Activated B cell treated with CpG ODN at 0.5 μM for 24 hours (primary cell): ENCODE measurements at regions of chr1 and their contacts with region 1.

Region 1: DNA sequence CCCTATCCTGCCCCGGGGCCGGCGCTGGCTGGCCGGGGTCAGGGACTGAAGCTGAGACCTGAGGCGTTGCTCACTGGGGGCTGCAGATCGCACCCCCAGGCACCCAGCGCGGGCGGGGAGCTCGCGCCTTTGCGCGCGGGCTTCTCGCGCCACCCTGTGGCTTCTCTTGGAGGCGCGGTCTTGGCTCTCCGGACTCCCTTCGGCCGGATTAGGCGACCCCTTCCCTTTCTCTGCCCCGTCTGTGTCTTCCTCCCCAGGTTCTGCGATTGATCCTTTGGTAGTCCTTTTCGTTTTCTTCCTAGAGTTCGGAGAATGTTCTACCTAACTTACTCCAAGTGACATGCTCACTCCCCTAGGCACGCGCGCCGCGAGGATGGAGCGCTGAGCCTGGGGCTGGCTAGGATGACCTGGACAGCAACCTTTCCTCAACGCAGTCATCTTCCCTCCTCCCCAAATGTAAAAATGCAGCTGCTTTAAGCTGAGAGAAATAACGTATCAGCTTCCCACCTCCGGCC is 495 bp upstream of the NTRK1 start:
- DNase-seq: peak; percentile 46
- ATAC-seq: peak; percentile 69
- H3K4me3 Mint-ChIP-seq: peak overlapping the region; percentile 65
- H3K27ac Mint-ChIP-seq: no peak overlapping the region
- H3K4me1 Mint-ChIP-seq: peaks cover 14% of the 10 kb centered on the region
- H3K27me3 Mint-ChIP-seq: peaks cover 50% of the 10 kb centered on the region
- CTCF ChIP-seq: no peak

Region 2: DNA sequence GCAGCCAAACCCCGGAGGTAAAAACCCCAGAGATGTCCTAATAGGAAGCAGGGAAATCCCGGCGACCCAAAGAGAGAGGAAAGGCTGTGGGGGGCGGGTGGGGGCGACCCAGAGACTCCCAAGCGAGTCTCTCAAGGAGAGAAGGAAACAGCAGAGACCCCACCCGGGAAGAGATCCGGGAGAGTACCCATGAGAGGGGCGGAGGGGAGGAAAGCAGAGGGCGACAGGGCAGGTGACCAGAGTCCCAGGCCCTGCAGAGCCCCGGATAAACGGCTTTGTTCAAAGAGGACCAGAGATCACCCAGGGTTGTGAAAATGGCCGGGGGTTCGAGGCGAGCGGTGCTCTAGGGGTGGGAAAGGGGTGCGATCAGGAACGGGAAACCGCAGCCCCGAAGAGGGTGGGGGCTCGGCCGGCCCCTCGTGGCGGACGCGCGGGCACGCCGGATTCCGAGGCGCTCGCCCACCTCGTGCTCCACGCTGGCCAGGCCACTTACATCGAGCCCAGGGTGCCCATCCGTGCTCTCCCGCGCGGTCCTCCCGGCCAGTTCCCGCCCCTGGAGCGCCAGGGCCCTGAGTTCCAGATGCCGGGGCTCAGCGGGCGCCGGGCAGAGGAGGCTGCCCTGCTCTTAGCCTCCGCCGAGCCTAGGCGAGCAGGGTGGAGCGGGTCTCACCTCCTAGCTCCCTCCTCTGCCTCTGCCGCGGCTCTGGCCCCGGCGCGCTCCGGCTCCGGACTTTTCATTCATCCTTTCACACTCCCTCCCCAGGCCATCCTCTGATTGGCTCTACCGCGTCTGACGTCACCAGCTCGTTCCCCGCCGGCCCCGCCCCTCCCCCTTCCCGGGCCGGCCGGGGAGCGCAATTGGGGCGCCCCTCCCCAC is 438.9 kb before region 1 on chr1:
- CTCF ChIA-PET with region 1: no interaction called
- POLR2A ChIA-PET with region 1: no interaction called
- intact Hi-C with region 1: no loop called
- DNase-seq: peak; percentile 50
- ATAC-seq: peak; percentile 73
- H3K4me3 Mint-ChIP-seq: peak overlapping the region; percentile 89
- H3K27ac Mint-ChIP-seq: no peak overlapping the region
- H3K4me1 Mint-ChIP-seq: peaks cover 23% of the 10 kb centered on the region
- H3K27me3 Mint-ChIP-seq: peaks cover 74% of the 10 kb centered on the region
- CTCF ChIP-seq: no peak

Region 3: GRCh38 chr1:156797212-156797871 is 62.8 kb before region 1 on chr1:
- CTCF ChIA-PET with region 1: interaction called, 27 read pairs
- POLR2A ChIA-PET with region 1: interaction called, 4 read pairs
- intact Hi-C with region 1: loop called (anchors 1 kb)
- DNase-seq: no peak
- ATAC-seq: peak; percentile 73
- H3K4me3 Mint-ChIP-seq: no peak overlapping the region
- H3K27ac Mint-ChIP-seq: no peak overlapping the region
- H3K4me1 Mint-ChIP-seq: peaks cover 7% of the 10 kb centered on the region
- H3K27me3 Mint-ChIP-seq: no peaks in the 10 kb centered on the region
- CTCF ChIP-seq: peak; percentile 57

Region 4: DNA sequence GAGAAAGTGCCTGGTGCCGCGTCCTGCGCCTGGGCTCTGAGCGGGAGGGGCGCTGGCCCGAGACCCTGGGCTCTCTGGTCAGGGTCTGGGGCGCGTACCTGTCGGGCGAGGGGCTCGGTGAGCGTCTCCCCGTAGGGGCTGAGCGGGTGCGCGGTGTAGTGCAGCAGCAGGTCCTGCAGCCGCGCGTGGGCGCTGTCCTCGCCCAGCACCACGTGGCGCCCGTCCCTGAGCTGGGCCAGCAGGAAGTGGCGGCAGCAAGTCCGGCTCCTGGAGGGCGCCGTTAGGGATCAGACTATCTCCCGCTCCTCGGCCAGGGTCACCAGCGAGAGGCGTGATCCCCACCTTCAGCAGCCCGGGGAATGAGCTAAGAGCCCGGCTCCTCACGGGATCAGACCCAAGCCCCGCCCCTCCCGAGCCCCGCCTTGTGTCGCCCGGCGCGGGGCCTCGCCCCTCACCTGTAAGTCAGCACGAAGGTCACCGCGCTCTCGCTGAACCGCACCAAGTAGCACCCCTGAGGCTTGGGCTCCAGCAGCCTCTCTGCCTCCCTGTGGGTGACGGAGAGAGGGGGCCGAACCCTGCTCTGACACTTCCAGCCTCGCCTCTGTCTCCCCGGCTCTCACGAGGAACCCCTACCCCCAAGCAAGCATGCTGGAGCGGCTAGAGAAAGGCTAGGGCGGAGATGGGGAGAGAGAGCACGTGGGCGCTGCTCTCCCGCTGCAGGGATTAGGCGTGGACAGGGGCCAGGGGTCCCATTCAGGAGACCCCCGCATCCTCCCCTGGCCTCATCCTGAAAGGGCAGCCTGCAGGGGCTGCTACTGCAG is 46.2 kb before region 1 on chr1:
- CTCF ChIA-PET with region 1: interaction called, 8 read pairs
- POLR2A ChIA-PET with region 1: no interaction called
- intact Hi-C with region 1: loop called (anchors 1 kb)
- DNase-seq: peak; percentile 57
- ATAC-seq: peak; percentile 74
- H3K4me3 Mint-ChIP-seq: peak overlapping the region; percentile 85
- H3K27ac Mint-ChIP-seq: no peak overlapping the region
- H3K4me1 Mint-ChIP-seq: peaks cover 32% of the 10 kb centered on the region
- H3K27me3 Mint-ChIP-seq: no peaks in the 10 kb centered on the region
- CTCF ChIP-seq: no peak

Region 5: DNA sequence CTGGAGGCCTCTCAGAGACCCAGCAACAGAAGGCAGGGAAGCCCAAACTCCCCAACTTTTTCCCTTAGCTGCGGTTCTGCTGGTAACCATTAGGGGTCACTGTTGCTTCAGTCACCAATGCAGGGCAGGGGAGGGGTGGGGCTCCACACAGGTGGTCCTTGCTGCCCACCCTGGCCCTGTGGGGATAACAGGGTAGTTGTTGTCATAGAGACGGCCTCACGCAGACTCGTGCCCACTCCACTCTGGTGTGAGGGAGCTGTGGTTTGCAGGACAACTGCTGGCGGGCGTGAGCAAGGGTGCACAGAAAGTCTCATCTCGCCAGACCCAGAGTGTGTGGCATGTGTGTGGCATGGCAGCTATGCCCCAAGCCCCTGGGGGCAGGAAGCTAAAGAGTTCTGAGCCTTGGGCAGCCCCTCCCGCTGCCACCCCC is 21.2 kb before region 1 on chr1:
- CTCF ChIA-PET with region 1: interaction called, 22 read pairs
- POLR2A ChIA-PET with region 1: no interaction called
- intact Hi-C with region 1: no loop called
- DNase-seq: no peak
- ATAC-seq: no peak
- H3K4me3 Mint-ChIP-seq: no peak overlapping the region
- H3K27ac Mint-ChIP-seq: no peak overlapping the region
- H3K4me1 Mint-ChIP-seq: no peaks in the 10 kb centered on the region
- H3K27me3 Mint-ChIP-seq: peaks cover 53% of the 10 kb centered on the region
- CTCF ChIP-seq: no peak

Region 6: GRCh38 chr1:156920233-156921052 is 60.3 kb after region 1 on chr1 and contains the start of gene LRRC71:
- CTCF ChIA-PET with region 1: no interaction called
- POLR2A ChIA-PET with region 1: no interaction called
- intact Hi-C with region 1: no loop called
- DNase-seq: no peak
- ATAC-seq: no peak
- H3K4me3 Mint-ChIP-seq: no peak within 1 kb of the TSS
- H3K27ac Mint-ChIP-seq: no peak within 1 kb of the TSS
- H3K4me1 Mint-ChIP-seq: peaks cover 2% of the 10 kb centered on the region
- H3K27me3 Mint-ChIP-seq: peaks cover 55% of the 10 kb centered on the region
- CTCF ChIP-seq: no peak
- total RNA-seq, gene LRRC71: not detected in 2 replicates

Region 7: DNA sequence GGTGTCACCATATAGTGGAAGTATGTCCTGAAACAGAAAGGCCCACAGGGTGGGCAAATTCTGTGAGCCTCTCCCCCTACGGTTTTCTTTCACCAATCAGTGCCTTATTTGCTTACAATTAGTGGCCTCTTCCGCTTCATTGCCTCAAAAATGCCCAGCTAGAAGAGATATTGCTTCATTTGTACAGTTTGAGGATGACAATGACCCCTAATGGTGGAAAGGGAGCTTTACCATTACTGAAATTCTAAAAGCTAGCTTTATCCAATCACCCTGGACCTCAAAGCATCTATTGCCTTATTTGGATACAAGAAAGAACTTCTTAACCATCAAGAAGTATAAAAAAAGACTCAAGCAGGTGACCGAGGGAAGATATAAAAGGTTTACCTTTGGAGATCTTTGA is 109.8 kb after region 1 on chr1:
- CTCF ChIA-PET with region 1: no interaction called
- POLR2A ChIA-PET with region 1: no interaction called
- intact Hi-C with region 1: no loop called
- DNase-seq: no peak
- ATAC-seq: no peak
- H3K4me3 Mint-ChIP-seq: no peak overlapping the region
- H3K27ac Mint-ChIP-seq: no peak overlapping the region
- H3K4me1 Mint-ChIP-seq: no peaks in the 10 kb centered on the region
- H3K27me3 Mint-ChIP-seq: peaks cover 28% of the 10 kb centered on the region
- CTCF ChIP-seq: no peak